ENCODE measurements at regions of chr11 and their contacts with region 1.

Region 1: DNA sequence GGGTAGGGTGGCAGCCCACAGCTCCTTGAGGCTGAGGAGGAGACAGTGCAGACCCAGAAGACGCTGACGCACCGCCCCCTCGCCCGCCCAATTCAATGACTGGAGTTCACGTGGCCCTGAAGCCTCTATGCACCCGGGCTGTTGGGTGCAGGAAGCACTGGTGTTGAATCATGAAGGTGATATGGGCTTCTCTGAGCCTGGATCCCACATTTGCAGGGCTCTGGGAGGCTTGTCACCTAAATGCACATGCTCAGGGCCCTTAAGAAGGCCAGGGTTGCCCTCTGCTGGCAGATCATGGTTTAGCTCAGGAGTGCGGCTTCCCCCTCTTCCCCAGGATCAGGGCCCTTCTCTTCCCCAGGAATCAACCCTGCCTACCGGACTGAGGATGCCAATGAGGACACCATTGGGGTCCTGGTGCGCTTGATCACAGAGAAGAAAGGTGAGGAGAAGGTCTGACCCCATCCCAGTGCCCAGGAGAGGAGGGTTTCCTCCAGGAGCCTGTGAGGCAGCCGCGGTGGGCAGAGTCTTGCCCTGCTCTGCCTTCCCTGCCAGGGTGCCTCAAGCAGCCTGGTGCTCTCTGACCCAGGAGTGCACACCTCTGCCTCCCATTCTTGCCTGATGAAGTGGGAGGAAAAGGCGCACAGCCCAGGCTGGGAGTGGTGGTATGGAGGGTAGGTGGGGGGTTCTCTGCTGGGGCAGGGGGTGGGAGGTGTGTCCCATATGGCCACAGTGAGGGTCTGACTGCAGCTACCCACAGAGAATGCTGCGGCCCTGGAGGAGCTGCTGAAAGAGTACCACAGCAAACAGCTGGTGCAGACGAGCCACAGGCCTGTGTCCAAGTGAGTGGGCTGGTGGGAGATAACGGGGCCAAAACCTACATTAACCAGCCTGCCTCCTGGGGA is 17.5 kb downstream of the RELT start:
- DNase-seq: peak; percentile 84
- ATAC-seq: peak; percentile 77

Region 2: DNA sequence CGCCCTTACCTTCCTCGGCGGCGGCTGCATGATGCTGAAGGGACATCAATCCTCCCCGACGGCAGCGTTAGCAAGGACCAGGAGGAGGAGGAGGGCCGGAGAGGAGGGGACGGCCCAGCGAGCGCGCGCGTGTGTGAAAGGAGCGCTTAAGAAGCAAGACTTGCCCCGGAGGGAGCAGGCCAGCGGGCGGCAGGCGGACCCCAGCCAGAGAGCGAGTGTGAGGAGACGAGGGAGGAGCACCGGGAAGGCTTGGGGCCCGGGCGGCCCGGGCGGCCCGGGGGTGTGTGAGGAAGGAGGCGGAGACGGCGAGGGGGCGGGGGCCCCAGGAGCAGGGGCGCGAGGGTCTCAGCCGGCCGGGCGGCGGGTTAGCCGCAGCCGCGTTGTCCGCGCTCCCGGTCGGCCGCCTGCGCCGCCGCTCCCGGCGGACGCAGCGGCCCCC is 251.9 kb before region 1 on chr11:
- intact Hi-C with region 1: no loop called
- DNase-seq: peak; percentile 89
- ATAC-seq: peak; percentile 49

Region 3: GRCh38 chr11:73307323-73308002 is 86.3 kb before region 1 on chr11:
- intact Hi-C with region 1: loop called (anchors 5 kb)
- DNase-seq: peak; percentile 99
- ATAC-seq: peak; percentile 72

Region 4: DNA sequence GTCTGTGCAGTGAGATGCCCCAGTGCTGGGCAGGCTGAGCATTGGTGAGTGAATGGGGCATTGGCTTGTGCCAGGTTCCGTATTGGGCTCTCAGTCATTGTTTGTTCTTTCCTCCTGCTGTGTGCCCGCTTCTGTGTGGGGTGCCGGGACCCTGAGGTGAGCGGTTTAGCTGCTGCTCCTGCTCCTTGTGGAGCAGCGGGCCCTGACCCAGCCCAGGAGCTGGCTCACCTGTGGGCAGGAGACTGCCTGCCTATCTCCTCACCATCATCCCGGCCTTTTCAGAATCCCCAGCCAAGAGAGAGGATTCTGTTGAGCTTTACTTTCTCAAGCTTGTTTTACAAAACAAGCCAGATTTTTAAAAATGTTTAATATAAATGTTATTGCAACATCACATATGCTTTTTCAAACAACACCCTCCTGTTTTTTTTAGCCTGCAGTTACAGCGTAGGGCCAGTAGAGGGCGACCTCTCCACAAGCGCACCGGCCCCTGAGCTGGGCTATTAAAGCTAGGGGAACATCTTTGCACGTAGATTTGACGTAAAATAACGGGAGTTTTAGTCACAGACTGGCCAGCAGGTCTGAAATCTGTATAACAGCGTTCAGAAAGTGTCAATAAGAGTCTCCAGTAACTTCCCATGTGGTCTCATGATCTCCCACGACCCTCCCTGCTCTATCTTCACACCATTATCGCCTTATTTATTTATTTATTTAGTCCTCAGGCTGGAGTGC is 42.7 kb before region 1 on chr11:
- intact Hi-C with region 1: loop called (anchors 5 kb)
- DNase-seq: peak; percentile 65
- ATAC-seq: peak; percentile 66

Region 5: DNA sequence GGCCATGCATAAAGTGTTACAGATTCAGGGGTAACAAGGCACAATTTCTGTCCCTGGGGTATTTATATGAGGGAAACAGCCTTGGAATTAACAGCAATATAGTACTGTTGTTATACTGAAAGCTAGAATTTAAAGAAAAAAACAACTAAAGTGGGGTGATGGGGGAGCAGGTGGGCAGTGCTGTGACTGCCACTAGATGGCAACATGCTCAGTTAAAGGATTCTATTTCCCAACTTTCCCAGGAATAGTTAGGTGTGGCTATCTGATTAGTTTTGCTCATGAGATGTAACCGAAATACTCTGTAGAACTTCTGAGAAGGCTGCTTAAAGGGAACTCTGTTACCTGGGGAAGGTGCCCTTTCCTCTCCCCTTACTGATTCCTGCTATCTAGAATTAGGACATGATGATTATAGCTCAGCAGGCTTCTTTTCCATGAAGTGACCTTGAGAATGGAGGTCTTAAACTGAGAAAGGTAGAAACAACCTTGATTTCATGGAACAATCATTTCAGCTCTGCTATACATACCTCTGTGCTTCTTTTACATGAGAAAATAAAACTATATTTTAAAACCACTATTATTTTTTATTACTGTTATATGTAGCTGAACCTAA is 85.1 kb after region 1 on chr11:
- intact Hi-C with region 1: no loop called
- DNase-seq: no peak
- ATAC-seq: peak; percentile 45

Region 6: DNA sequence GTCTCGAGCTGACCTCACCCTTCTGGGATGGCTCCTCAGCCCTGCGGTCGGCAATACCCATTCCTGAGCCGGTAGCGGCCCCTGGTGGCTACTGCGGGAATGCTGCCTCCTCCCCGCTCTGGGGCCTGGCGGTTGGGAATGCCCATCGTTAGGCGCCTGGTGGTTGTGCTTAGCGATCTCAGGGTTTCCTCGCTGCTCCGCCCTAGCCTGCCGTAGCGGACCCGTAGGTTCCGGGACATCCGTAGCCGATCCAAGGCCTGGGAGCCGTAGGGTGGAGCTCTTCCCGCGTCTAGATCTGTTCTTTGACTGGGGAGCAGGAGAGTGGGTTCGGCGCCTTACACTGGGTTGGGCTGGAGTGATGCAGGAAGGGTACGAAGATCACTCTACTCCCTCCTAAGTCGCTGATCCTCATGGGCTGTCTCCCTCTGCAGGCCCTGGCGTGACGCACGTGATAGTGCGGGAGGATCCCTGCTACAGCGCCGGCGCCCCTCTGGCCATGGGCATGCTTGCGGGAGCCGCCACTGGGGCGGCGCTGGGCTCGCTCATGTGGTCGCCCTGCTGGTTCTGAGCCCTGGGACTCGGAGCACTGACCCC is 267.4 kb after region 1 on chr11:
- intact Hi-C with region 1: loop called (anchors 2 kb)
- DNase-seq: peak; percentile 94
- ATAC-seq: peak; percentile 98

Measured in Right ventricle myocardium superior (tissue), 1 donor.